ENCODE measurements at regions of chr5 and their contacts with region 1.

Region 1: DNA sequence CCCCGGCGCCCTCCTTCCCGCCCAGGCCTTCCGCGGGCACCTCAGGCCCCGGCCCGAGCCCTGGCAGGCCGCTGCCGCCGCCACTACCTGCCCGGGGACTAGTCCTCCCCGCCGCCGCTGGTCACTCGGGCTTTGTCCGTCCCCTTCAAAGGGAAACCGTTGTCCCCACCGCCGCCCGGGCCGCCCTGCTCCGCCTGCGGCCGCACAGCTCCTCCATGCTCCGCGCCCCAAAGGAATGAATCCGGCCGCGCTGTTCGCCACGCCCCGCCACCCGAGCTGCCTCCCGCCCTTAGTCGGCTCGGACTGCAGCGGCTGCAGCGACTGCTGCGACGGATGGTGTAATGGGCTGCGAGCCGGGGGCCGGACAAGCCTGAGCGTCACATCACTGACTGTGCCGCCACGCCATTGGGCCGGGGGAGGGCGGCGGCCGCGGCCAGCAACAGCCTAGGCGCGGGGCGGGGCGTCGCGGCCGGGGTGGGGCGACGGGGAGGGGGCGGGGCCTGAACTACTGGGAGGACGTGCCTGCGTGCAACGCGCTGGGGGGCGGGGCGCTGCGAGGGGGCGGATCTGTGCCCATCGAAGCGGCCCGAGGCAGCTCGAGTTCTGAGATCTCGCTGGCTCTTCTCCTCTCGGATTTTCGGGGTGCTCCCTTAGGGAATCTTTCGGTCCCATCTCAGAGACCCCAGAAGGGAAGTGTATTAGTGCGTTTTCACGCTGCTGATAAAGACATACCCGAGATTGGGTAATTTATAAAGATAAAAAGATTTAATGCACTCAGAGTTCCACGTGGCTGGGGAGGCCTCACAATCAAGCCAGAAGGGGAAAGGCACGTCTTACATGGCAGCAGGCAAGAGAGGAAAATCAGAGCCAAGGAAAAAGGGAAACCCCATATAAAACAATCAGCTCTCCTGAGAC is at the start of gene FEM1C:
- DNase-seq: peak; percentile 88 to 99 (median 93)
- ATAC-seq: peak; percentile 83 to 87
- H3K4me3 Mint-ChIP-seq: peak within 1 kb of the TSS; percentile 90 to 100 (median 96)
- H3K27ac Mint-ChIP-seq: peak within 1 kb of the TSS; percentile 85 to 99 (median 98)
- H3K4me1 Mint-ChIP-seq: peaks cover 21 to 57% (median 49%) of the 10 kb centered on the region in 4 donors
- H3K27me3 Mint-ChIP-seq: no peaks in the 10 kb centered on the region
- polyA plus RNA-seq, gene FEM1C: 1.8 to 2.9 (median 1.9) TPM

Region 2: GRCh38 chr5:115262321-115263077 is 282.2 kb before region 1 on chr5 and contains the start of gene PGGT1B:
- POLR2A ChIA-PET with region 1: interaction called, 11 read pairs
- DNase-seq: peak; percentile 48 to 82 (median 65)
- ATAC-seq: peak; percentile 97
- H3K4me3 Mint-ChIP-seq: peak within 1 kb of the TSS; percentile 90 to 99 (median 96)
- H3K27ac Mint-ChIP-seq: peak within 1 kb of the TSS; percentile 95 to 98 (median 96)
- H3K4me1 Mint-ChIP-seq: peaks cover 19 to 56% (median 53%) of the 10 kb centered on the region in 4 donors
- H3K27me3 Mint-ChIP-seq: no peaks in the 10 kb centered on the region
- polyA plus RNA-seq, gene PGGT1B: 7.1 to 17.4 (median 10.8) TPM

Region 3: GRCh38 chr5:115296124-115297022 is 248.3 kb before region 1 on chr5 and contains the start of gene CCDC112:
- POLR2A ChIA-PET with region 1: interaction called, 13 read pairs
- DNase-seq: peak; percentile 43 to 86 (median 69)
- ATAC-seq: peak; percentile 84 to 87
- H3K4me3 Mint-ChIP-seq: peak within 1 kb of the TSS; percentile 70 to 95 (median 89)
- H3K27ac Mint-ChIP-seq: peak within 1 kb of the TSS; percentile 38 to 93 (median 54)
- H3K4me1 Mint-ChIP-seq: peaks cover 3 to 27% (median 12%) of the 10 kb centered on the region in 4 donors
- H3K27me3 Mint-ChIP-seq: peaks cover 0 to 8% (median 0%) of the 10 kb centered on the region in 5 donors
- polyA plus RNA-seq, gene CCDC112: 2.8 to 4.5 (median 4.3) TPM

Region 4: DNA sequence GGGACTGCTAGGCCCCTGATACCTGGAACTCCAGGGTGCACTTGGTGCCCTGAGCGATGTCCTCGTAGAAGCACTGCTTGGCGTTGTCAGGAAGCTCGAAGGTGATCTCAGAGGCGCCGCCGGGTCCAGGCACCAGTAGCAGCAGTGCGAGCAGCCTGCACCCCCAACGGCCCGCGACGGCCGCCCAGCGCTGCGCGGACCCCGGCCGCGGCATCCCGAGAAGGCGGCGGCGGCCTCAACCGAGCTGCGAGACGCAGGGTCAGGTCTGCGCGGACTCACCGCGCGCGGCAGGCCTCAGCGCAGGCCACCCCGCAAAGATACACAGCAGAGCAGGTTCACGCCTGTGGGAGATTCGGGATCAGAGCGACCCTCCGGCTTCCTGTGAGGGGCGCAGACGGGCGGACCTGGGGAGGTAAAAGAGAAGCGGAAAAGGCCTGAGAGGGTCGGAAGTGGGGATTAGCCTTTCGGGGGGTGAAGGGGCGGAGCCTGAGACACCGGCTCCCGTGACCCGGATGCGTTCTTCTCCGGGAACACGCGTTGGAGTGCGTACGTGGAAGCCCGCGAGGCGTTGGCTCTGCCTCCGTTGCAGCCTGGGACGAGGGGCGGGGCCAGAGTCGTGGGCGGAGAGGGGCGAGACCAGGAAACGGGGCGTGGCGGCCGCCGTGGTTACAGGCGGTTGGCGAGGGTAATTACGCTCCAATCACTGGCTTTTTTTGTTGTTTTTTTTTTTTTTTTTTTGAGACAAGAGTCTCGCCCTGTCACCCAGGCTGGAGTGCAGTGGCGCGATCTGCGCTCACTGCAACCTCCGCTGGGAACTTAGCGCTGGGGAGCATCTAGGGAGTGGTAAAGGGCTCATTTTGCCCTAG is 81.1 kb after region 1 on chr5 and contains the start of gene TMED7:
- POLR2A ChIA-PET with region 1: interaction called, 17 read pairs
- DNase-seq: peak; percentile 94 to 100 (median 99)
- ATAC-seq: peak; percentile 89 to 90
- H3K4me3 Mint-ChIP-seq: peak within 1 kb of the TSS in 1 of 10 donors; percentile 95
- H3K27ac Mint-ChIP-seq: peak within 1 kb of the TSS in 3 of 10 donors; percentile 94 to 98 (median 97)
- H3K4me1 Mint-ChIP-seq: peaks cover 16 to 32% (median 27%) of the 10 kb centered on the region in 4 donors
- H3K27me3 Mint-ChIP-seq: no peaks in the 10 kb centered on the region
- polyA plus RNA-seq, gene TMED7: 30.3 to 43.2 (median 37.2) TPM